Endothelial cell of umbilical vein (primary cell): ENCODE measurements at regions of chr1 and their contacts with region 1.

Region 1: DNA sequence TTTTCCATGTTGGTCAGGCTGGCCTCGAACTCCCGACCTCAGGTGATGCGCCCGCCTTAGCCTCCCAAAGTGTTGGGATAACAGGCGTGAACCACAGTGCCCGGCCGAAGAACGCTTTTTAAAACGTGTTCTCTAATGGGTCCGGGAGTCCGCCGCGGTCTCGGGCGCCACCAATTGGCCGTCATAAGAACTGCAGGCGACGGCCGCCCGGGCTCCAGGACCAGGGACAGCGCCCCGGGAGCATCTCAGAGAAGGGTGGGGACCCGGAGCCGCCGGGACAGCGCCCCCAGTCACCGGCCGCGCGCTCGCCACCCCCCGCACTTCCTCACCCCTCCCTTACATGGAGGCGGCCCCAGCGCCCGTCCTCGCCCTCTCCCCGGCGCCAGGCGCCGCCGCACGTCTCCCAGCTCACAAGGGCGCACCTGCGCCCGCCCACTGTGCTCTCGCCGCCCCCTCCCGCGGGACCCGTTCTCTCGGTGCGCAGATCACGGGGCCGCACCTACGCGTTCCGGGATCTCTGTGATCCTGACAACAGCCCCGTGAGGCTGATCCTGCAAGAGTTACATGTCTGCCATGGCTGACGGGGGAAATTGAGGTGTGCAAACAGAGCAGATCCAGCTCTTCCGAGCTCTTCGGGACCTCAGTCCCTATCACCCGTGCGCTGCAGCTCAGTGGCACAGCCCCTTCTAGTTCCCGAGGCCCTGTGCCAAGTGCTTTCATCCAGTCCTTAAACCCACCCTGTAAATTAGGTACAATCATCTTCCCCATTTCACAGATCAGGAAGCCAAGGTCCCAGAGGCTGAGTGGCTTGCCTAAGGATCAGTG is 9.8 kb downstream of the RAP1GAP start:
- DNase-seq: peak; percentile 70
- H3K4me3 ChIP-seq: no peak overlapping the region
- H3K27ac ChIP-seq: no peak overlapping the region
- H3K4me1 ChIP-seq: no peaks in the 10 kb centered on the region
- H3K27me3 ChIP-seq: peaks cover 7% of the 10 kb centered on the region in 2 experiments
- CTCF ChIP-seq: peak; percentile 87 to 92
- POLR2A ChIP-seq: no peak

Region 2: GRCh38 chr1:21573971-21574465 is 85.3 kb before region 1 on chr1:
- CTCF ChIA-PET with region 1: no interaction called
- POLR2A ChIA-PET with region 1: no interaction called
- dilution Hi-C with region 1: no loop called
- intact Hi-C with region 1: loop called (anchors 1 kb)
- DNase-seq: peak; percentile 99
- H3K4me3 ChIP-seq: no peak overlapping the region
- H3K27ac ChIP-seq: peak overlapping the region; percentile 87
- H3K4me1 ChIP-seq: peaks cover 17% of the 10 kb centered on the region
- H3K27me3 ChIP-seq: peaks cover 0 to 8% of the 10 kb centered on the region in 2 experiments
- CTCF ChIP-seq: peak; percentile 34 to 50
- POLR2A ChIP-seq: peak; percentile 31

Region 3: GRCh38 chr1:21594935-21595897 is 64.1 kb before region 1 on chr1:
- CTCF ChIA-PET with region 1: interaction called, 5 read pairs
- POLR2A ChIA-PET with region 1: no interaction called
- dilution Hi-C with region 1: no loop called
- intact Hi-C with region 1: loop called (anchors 2 kb)
- DNase-seq: peak; percentile 49
- H3K4me3 ChIP-seq: no peak overlapping the region
- H3K27ac ChIP-seq: no peak overlapping the region
- H3K4me1 ChIP-seq: no peaks in the 10 kb centered on the region
- H3K27me3 ChIP-seq: peaks cover 0 to 5% of the 10 kb centered on the region in 2 experiments
- CTCF ChIP-seq: peak; percentile 67 to 82
- POLR2A ChIP-seq: no peak

Region 4: GRCh38 chr1:21616372-21616771 is 42.9 kb before region 1 on chr1:
- CTCF ChIA-PET with region 1: no interaction called
- POLR2A ChIA-PET with region 1: no interaction called
- dilution Hi-C with region 1: no loop called
- intact Hi-C with region 1: no loop called
- DNase-seq: no peak
- H3K4me3 ChIP-seq: no peak overlapping the region
- H3K27ac ChIP-seq: no peak overlapping the region
- H3K4me1 ChIP-seq: no peaks in the 10 kb centered on the region
- H3K27me3 ChIP-seq: peaks cover 0 to 11% of the 10 kb centered on the region in 2 experiments
- CTCF ChIP-seq: no peak
- POLR2A ChIP-seq: no peak

Region 5: GRCh38 chr1:21647431-21648351 is 11.6 kb before region 1 on chr1:
- CTCF ChIA-PET with region 1: interaction called, 34 read pairs
- POLR2A ChIA-PET with region 1: no interaction called
- dilution Hi-C with region 1: no loop called
- intact Hi-C with region 1: loop called (anchors 1 kb)
- DNase-seq: peak; percentile 53
- H3K4me3 ChIP-seq: no peak overlapping the region
- H3K27ac ChIP-seq: no peak overlapping the region
- H3K4me1 ChIP-seq: peaks cover 3% of the 10 kb centered on the region
- H3K27me3 ChIP-seq: peaks cover 12 to 16% of the 10 kb centered on the region in 2 experiments
- CTCF ChIP-seq: no peak
- POLR2A ChIP-seq: no peak